ENCODE measurements at regions of chr6 and their contacts with region 1.

Region 1: GRCh38 chr6:44172731-44173500 is 14.3 kb downstream of the CAPN11 start:
- H3K4me3 Mint-ChIP-seq: no peak overlapping the region
- H3K27ac Mint-ChIP-seq: no peak overlapping the region
- H3K4me1 Mint-ChIP-seq: peaks cover 28% of the 10 kb centered on the region
- H3K27me3 Mint-ChIP-seq: peaks cover 26% of the 10 kb centered on the region

Region 2: GRCh38 chr6:44237813-44238433 is 65.0 kb after region 1 on chr6:
- intact Hi-C with region 1: loop called (anchors 1 kb)
- H3K4me3 Mint-ChIP-seq: peak overlapping the region; percentile 96
- H3K27ac Mint-ChIP-seq: peak overlapping the region; percentile 98
- H3K4me1 Mint-ChIP-seq: peaks cover 46% of the 10 kb centered on the region
- H3K27me3 Mint-ChIP-seq: peaks cover 6% of the 10 kb centered on the region

Region 3: GRCh38 chr6:44253307-44254101 is 80.6 kb after region 1 on chr6:
- intact Hi-C with region 1: loop called (anchors 1 kb)
- H3K4me3 Mint-ChIP-seq: no peak overlapping the region
- H3K27ac Mint-ChIP-seq: no peak overlapping the region
- H3K4me1 Mint-ChIP-seq: peaks cover 83% of the 10 kb centered on the region
- H3K27me3 Mint-ChIP-seq: no peaks in the 10 kb centered on the region

Region 4: GRCh38 chr6:45522486-45522885 is 1349.6 kb after region 1 on chr6:
- intact Hi-C with region 1: no loop called
- H3K4me3 Mint-ChIP-seq: no peak overlapping the region
- H3K27ac Mint-ChIP-seq: no peak overlapping the region
- H3K4me1 Mint-ChIP-seq: peaks cover 16% of the 10 kb centered on the region
- H3K27me3 Mint-ChIP-seq: no peaks in the 10 kb centered on the region

Measured in dendritic cell treated with granulocyte-macrophage colony-stimulating factor and Interleukin-4, amounts not matched to agents 40 ng/mL and 50 ng/mL, for 4 days (primary cell).